Cardiac septum (tissue), 1 donor: ENCODE measurements at regions of chr18 and their contacts with region 1.

Region 1: DNA sequence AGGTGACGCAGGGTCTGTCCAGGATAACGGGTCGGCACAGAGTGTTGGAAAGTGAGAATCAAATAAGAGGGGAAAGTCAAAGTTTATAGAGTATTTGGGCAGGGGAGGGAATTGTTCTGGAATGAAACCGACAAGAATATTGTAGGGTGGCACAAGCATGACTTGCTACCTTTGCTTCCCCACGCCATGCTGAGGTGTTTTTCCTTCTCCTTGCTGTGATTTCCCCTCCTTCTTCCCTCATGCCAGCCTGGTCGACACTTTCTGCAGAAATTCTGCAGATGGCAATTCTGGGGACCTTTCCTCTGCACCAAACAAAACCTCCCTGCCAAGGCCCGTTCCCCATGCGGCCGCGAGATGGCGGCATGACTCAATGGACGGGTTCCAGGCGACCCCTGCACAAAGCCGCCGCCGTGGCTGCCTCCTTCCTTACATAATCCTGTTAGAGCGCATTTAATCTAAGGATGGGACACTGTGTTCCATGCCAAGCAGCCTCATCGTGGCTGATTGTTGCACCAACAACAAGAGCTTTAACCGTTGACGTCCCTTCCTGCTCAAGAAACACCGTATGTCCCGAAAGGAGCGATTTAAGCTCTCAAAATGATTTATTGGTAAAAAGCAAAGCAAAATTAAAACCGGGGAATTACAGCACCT is at the start of gene MRO:
- DNase-seq: peak; percentile 94
- total RNA-seq, gene MRO: 1.4 TPM

Region 2: DNA sequence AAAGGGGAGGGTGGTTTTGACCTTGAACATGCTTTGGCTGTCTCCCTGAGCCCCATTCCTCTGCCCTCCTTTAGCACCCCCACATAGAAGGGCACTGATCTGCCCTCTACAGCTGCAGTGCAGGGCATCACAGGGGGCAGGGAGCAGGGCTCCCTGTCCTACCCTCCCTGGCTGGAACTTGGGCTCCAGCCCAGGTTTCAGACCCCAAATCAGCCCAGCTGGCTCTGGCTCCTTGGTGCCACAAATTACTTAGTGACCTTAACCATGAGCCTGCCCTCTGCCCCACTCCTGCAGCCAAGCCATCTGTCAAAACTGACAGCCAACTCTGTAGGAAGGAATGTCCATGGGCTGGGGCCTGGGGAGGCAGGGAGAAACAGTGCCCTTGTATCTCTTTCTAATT is 154.3 kb before region 1 on chr18:
- intact Hi-C with region 1: no loop called
- DNase-seq: peak; percentile 84

Region 3: GRCh38 chr18:50769463-50769862 is 50.4 kb before region 1 on chr18:
- intact Hi-C with region 1: no loop called
- DNase-seq: no peak

Region 4: DNA sequence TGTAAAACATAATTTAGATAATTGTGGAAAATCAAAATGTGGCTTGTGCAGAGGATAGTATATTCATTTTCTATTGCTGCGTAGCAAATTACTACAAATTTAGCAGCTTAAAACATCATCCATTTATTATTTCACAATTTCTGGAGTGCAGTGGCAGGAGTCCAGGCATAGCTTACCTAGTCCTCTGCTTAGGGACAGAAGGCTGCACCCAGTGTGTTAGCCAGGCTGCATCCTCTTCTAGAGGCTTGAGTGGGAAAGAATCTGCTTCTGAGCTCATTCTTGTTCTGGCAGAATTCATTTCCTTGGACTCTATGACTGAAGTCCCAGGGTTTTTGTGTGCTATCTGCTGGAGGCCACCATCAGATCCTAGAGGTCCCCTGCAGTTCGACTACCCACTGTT is 39.7 kb before region 1 on chr18:
- intact Hi-C with region 1: no loop called
- DNase-seq: no peak

Region 5: GRCh38 chr18:50866765-50867164 is 46.9 kb after region 1 on chr18:
- intact Hi-C with region 1: loop called (anchors 5 kb)
- DNase-seq: no peak

Region 6: DNA sequence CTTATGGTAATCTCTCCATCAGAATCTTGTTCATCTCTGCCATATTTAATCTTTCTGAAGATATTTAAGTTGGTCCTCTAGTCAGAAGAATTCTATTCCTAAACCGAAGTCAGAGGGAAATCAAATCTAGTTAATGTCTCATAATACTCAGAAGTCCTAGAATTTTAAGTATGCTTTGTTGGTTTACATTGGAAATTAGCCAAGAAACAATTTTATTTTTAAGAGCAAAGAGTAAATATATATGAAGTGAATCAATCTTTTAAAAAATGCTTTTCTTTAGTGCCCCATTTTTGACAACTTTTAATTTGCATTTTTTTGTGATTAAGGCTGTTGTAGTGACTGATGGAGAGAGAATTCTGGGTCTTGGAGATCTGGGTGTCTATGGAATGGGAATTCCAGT is 97.2 kb after region 1 on chr18:
- intact Hi-C with region 1: no loop called
- DNase-seq: no peak

Region 7: DNA sequence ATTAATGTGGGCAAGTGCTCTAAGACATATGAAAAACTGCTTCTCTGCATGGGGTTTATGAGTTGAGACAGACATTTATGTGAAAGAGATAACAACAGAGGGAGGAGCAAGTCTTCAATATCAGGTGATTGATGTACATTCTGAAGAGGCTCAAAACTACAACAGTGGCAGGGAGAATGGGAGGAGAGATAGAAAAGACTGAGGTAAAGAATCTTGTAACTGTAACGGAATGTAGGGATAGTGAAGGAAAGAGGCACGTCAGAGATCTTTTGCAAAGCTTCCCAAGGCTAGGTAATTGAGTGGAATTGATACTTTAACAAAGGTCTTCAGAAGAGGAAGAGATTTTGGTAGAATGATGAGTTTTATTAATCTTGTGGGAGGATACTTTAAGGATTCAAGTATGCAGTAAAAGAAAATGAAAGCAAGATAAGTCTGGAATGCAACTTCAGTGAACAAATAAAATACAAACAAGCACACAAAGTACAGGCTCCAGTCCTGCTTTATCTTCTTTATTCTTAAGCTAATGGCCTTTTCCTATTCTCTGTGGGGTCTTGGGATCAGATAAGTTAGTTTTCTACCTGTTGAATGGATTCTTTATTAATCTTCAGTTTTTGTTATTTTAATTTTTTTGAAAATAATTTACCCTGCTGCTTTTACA is 225.2 kb after region 1 on chr18:
- intact Hi-C with region 1: loop called (anchors 5 kb)
- DNase-seq: no peak